ENCODE measurements at regions of chr6 and their contacts with region 1.

Region 1: DNA sequence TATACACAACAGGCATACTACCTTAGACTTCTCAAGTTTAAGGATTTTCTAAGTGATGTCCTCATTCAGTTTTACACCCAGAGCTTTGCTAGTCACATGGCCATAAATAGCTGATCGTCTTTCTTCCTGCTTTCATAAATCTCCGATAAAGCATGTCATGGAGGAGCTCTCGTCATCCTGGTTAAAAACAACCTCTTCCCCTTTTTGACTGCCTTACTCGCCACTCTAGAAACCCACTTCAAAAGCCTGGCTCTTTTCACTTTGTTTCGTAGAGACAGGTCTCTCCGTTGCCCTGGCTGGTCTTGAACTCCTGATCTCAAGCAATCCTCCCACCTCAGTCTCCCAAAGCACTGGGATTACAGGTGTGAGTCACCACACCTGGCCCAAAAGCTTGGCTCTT is 67.0 kb upstream of the SMIM29 start:
- DNase-seq: no peak
- H3K4me3 ChIP-seq: no peak overlapping the region
- H3K27ac ChIP-seq: no peak overlapping the region
- H3K4me1 ChIP-seq: no peaks in the 10 kb centered on the region
- H3K27me3 ChIP-seq: no peaks in the 10 kb centered on the region
- CTCF ChIP-seq: no peak
- POLR2A ChIP-seq: no peak

Region 2: GRCh38 chr6:34392497-34393190 is 76.9 kb after region 1 on chr6 and contains the start of gene NUDT3:
- intact Hi-C with region 1: loop called (anchors 10 kb)
- DNase-seq: peak; percentile 93
- H3K4me3 ChIP-seq: peak within 1 kb of the TSS; percentile 88 to 90
- H3K27ac ChIP-seq: peak within 1 kb of the TSS; percentile 90 to 91
- H3K4me1 ChIP-seq: no peaks in the 10 kb centered on the region
- H3K27me3 ChIP-seq: no peaks in the 10 kb centered on the region
- CTCF ChIP-seq: peak in 3 of 4 experiments; percentile 67 to 94 (median 91)
- POLR2A ChIP-seq: peak; percentile 40
- total RNA-seq, gene NUDT3: 28.9 to 30.8 TPM

Measured in prostate gland (tissue), 2 donors.